ENCODE measurements at regions of chr1 and their contacts with region 1.

Region 1: DNA sequence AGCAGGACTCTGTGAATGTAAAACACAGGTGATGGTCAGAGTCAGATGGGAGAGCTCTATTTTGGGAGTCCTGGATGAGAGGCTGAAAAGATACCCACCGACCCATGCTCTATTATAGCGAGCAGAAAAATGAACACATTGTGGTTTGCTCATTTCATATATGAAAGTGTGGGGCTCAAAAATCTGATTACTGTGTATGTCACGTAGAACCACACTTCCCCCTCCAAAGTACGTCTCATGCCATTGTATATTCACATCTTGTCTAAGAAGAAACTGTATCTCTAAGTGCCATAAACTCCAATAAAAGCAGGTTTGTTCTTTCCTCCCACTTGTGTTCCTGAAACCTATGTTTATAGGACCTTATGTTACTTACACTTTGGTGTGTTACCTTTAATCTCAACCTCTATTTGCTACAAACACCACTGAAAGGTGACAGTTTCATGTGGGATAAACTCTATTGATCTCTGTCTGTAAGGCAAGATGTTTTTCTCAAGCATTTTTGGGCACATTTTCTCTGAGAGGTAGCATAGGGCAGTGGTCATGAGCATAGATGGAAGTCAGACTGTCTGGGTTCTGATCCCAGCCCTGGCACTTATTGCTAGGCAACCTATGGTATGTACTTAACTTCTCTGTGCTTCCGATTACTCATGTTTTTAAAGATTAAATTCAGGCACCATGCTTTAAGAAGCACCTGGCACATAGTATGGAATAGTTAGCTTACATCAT is 214.4 kb downstream of the ST6GALNAC3 start:
- DNase-seq: no peak
- H3K4me3 Mint-ChIP-seq: no peak overlapping the region
- H3K27ac Mint-ChIP-seq: peak overlapping the region; percentile 23
- H3K4me1 Mint-ChIP-seq: peaks cover 83% of the 10 kb centered on the region
- H3K27me3 Mint-ChIP-seq: no peaks in the 10 kb centered on the region

Region 2: DNA sequence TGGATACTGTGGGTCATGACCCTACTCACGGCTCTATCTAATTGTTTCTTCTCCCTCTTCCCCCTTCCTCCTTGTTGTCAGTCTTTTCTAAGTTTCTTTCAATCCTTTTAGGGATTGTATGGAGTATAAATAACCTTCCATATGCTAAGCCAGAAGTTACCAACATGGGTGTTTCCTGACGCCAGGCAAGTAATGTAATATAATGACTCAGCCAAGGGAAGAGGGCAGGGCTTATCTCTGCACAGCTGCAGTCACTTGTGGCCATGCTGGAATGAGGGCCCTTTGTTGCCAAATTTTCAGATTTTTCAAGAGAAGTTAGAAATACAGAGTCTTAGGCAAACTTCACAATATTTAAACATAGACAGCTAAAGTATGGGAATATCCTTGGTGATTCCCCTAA is 19.8 kb before region 1 on chr1:
- intact Hi-C with region 1: loop called (anchors 1 kb)
- DNase-seq: no peak
- H3K4me3 Mint-ChIP-seq: peak overlapping the region; percentile 48
- H3K27ac Mint-ChIP-seq: peak overlapping the region; percentile 77
- H3K4me1 Mint-ChIP-seq: peaks cover 71% of the 10 kb centered on the region
- H3K27me3 Mint-ChIP-seq: no peaks in the 10 kb centered on the region

Region 3: GRCh38 chr1:76640092-76640491 is 351.2 kb after region 1 on chr1:
- intact Hi-C with region 1: no loop called
- DNase-seq: no peak
- H3K4me3 Mint-ChIP-seq: no peak overlapping the region
- H3K27ac Mint-ChIP-seq: no peak overlapping the region
- H3K4me1 Mint-ChIP-seq: no peaks in the 10 kb centered on the region
- H3K27me3 Mint-ChIP-seq: no peaks in the 10 kb centered on the region

Region 4: DNA sequence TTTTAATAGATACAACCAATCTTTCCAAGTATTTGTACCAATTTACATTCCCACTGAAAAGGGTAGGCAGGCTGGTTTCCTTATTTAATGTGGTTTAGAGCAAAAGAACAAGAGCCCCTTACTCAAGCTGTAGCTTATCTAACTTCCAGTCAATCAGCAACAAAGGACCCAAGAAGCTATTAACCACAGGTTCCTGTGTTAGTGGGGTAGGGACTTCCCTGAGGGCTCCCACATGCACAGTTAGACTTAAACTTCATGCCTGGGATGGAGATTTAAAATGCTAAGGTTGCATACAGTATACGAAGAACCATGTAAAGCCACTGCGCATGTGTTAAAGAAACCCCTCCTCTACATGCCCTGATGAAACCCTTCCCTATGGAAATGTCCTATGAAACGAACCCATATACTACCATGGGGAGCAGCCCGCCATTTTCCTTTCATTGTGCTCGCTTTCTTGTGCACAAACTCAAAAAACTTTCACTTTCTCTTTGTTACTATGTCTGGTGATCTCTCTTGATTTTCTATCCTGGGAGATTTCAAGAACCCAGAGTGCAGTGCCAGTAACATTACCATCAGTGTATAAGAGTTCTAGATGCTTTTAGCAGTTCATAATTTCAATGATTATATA is 555.0 kb after region 1 on chr1:
- intact Hi-C with region 1: no loop called
- DNase-seq: no peak
- H3K4me3 Mint-ChIP-seq: no peak overlapping the region
- H3K27ac Mint-ChIP-seq: no peak overlapping the region
- H3K4me1 Mint-ChIP-seq: no peaks in the 10 kb centered on the region
- H3K27me3 Mint-ChIP-seq: peaks cover 2% of the 10 kb centered on the region

Measured in activated T-helper 1 cell treated with anti-CD3 and anti-CD28 coated beads, Interleukin-12 subunit alpha, Interleukin-12 subunit beta, Interleukin-2, Interleukin-4 antibody, amounts not matched to agents 30 ng/mL and 10 ng/mL and 1 ng/mL, durations not matched to agents 14 hours and 24 hours and 36 hours (primary cell).